Activated T-helper 1 cell treated with anti-CD3 and anti-CD28 coated beads, Interleukin-12 subunit alpha, Interleukin-12 subunit beta, Interleukin-2, Interleukin-4 antibody, amounts not matched to agents 30 ng/mL and 10 ng/mL and 1 ng/mL, durations not matched to agents 14 hours and 24 hours and 36 hours (primary cell): ENCODE measurements at regions of chr20 and their contacts with region 1.

Region 1: DNA sequence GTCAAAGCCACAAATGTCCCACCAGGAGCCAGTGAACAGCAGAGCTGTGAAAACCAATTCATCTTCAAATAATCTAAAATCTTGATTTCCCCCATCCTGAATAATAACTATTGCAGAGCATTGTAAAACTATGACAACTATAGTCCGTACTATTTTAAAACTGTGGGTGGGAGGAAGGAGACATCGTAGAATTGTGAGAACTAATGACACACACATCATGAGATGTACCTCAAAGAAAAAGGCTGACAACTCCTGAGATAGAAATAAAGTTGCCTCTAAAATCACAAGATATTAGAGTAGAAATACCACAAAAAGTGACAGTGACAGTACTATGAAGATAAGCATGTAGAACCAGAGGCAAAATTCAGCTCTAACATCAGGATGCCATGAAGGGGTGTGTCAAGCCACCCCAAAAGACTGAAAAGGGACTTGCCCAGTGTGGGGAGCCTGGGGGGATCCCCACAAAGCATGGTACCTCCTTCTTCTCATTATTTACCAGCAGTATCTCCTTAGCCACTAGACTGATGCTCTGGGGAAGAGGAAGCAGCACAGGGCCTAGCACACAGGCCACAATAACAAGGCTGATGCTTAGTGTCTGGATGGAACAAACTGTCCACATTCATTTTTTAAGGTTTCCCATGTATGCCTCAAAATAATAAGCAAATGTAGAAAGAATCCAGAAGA is 13.4 kb downstream of the NAPB start:
- DNase-seq: peak; percentile 60
- H3K4me3 Mint-ChIP-seq: peak overlapping the region; percentile 60
- H3K27ac Mint-ChIP-seq: peak overlapping the region; percentile 91
- H3K4me1 Mint-ChIP-seq: peaks cover 85% of the 10 kb centered on the region
- H3K27me3 Mint-ChIP-seq: no peaks in the 10 kb centered on the region

Region 2: GRCh38 chr20:23340524-23340923 is 67.4 kb before region 1 on chr20:
- intact Hi-C with region 1: no loop called
- DNase-seq: no peak
- H3K4me3 Mint-ChIP-seq: no peak overlapping the region
- H3K27ac Mint-ChIP-seq: no peak overlapping the region
- H3K4me1 Mint-ChIP-seq: peaks cover 11% of the 10 kb centered on the region
- H3K27me3 Mint-ChIP-seq: peaks cover 12% of the 10 kb centered on the region

Region 3: GRCh38 chr20:23420943-23421931 is 13.3 kb after region 1 on chr20 and contains the start of gene NAPB:
- intact Hi-C with region 1: loop called (anchors 1 kb)
- DNase-seq: peak; percentile 92
- H3K4me3 Mint-ChIP-seq: peak within 1 kb of the TSS; percentile 97
- H3K27ac Mint-ChIP-seq: peak within 1 kb of the TSS; percentile 81
- H3K4me1 Mint-ChIP-seq: peaks cover 49% of the 10 kb centered on the region
- H3K27me3 Mint-ChIP-seq: no peaks in the 10 kb centered on the region
- total RNA-seq, gene NAPB: 14.0 and 15.5 TPM in 2 replicates

Region 4: DNA sequence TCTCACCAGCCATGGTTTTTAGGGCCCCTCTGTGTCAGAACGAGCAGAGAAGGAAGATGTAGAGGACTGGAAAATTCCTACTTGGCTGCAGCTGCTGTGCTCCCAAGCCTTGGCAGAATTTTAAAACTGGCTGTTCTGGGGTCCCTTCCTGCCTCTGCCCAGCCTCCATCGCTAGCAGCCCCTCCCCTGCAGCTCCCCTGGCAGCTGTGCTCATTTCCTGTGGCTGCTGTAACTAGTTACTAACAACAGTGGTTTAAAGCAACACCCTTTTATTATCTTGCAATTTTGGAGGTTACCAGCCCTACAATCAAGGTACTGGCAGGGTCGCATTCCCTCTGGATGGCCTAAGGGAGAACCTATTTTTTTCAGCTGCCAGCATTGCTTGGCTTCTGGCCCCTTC is 48.5 kb after region 1 on chr20:
- intact Hi-C with region 1: no loop called
- DNase-seq: no peak
- H3K4me3 Mint-ChIP-seq: no peak overlapping the region
- H3K27ac Mint-ChIP-seq: no peak overlapping the region
- H3K4me1 Mint-ChIP-seq: peaks cover 15% of the 10 kb centered on the region
- H3K27me3 Mint-ChIP-seq: peaks cover 4% of the 10 kb centered on the region

Region 5: GRCh38 chr20:23565503-23566045 is 157.7 kb after region 1 on chr20:
- intact Hi-C with region 1: no loop called
- DNase-seq: no peak
- H3K4me3 Mint-ChIP-seq: no peak overlapping the region
- H3K27ac Mint-ChIP-seq: no peak overlapping the region
- H3K4me1 Mint-ChIP-seq: no peaks in the 10 kb centered on the region
- H3K27me3 Mint-ChIP-seq: no peaks in the 10 kb centered on the region

Region 6: DNA sequence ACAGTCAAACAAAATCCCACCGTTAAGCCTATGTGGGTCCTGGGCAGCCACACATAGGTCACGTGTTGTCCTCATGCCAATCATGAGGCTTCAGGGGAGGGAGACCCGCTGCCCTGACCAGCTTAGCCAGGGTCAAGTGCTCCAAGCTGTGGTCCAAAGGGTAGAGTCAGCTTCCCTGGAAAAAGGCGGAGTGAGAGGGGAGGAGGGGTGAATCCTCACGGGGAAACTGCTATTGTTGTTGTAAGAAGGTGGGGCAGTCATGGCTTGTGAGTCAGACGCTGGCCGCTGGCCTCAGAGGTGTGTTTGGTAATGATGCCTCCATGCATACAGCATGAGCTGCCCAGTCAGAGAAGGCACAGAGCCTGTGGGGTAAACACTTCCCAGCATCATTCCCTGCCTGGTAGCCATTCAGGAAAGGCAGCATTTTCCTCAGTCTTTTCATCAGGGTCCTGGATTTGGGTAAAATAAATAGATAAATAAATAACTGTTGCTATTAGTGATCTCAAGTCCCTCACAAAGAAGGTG is 221.2 kb after region 1 on chr20:
- intact Hi-C with region 1: no loop called
- DNase-seq: no peak
- H3K4me3 Mint-ChIP-seq: no peak overlapping the region
- H3K27ac Mint-ChIP-seq: no peak overlapping the region
- H3K4me1 Mint-ChIP-seq: no peaks in the 10 kb centered on the region
- H3K27me3 Mint-ChIP-seq: no peaks in the 10 kb centered on the region